Posterior vena cava (tissue), 2 donors: ENCODE measurements at regions of chr16 and their contacts with region 1.

Region 1: GRCh38 chr16:6667393-6667792 is 665.3 kb upstream of the RBFOX1 start:
- DNase-seq: no peak

Region 2: DNA sequence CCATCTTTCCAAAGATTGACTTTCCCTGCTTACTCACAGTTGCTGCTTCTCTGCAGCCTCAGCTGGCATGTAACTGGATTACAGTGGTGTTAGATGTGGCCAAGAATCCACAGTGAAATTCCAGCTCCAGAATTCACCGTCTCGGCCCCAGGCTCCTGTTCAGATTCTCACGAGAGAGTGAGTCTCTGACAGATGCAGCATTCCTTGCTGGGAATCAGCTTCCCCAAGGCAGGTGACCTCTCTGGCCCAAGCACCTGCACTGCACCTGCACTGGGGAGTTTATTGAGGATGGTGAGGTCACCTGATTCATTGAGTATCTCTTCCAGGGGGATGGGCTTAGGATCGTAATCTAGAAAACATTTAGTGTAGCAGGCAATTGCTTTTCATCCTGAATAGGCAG is 64.8 kb after region 1 on chr16:
- intact Hi-C with region 1: loop called in 1 of 2 experiments (anchors 2 kb)
- DNase-seq: no peak